CD4-positive, alpha-beta T cell (primary cell): ENCODE measurements at regions of chr12 and their contacts with region 1.

Region 1: DNA sequence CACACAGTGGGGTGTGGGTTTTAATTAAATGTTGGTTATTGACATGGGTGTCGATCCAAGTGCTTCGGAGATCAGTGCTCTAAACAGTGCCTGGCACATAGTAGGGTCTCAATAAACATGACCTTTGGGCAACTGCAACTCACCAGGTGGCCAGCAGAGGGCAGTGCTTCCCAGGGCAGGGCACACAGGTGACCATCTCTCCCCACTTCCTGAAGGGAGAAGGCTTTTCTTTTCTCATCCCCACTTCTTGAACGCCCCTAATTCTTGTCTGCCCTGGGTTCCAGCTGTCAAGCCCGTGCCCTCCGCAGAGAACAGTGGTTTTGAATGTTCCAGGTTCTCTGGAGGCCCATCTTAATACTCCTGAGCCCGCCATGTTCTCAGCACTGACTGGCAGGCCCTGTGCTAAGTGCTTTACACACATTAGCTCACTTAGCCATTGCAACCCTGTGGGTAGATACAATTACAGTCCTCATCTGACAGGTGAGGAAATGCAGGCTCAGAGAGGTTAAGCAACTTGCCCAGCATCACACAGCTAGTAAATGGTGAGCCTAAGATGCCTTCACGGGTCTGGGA is 16.3 kb downstream of the RAPGEF3 start:
- DNase-seq: peak; percentile 57 to 83 (median 68)
- ATAC-seq: peak; percentile 38
- H3K4me3 ChIP-seq: no peak overlapping the region
- H3K4me3 Mint-ChIP-seq: no peak overlapping the region
- H3K27ac ChIP-seq: no peak overlapping the region
- H3K27ac Mint-ChIP-seq: no peak overlapping the region
- H3K4me1 ChIP-seq: peaks cover 38% of the 10 kb centered on the region
- H3K4me1 Mint-ChIP-seq: peaks cover 42% of the 10 kb centered on the region
- H3K27me3 ChIP-seq: no peaks in the 10 kb centered on the region
- H3K27me3 Mint-ChIP-seq: no peaks in the 10 kb centered on the region
- CTCF ChIP-seq: peak; percentile 100

Region 2: GRCh38 chr12:47758834-47759690 is 16.7 kb after region 1 on chr12 and contains the start of gene RAPGEF3:
- CTCF ChIA-PET with region 1: interaction called, 69 read pairs
- POLR2A ChIA-PET with region 1: interaction called, 8 read pairs
- intact Hi-C with region 1: no loop called
- DNase-seq: peak; percentile 35 to 86 (median 65)
- ATAC-seq: peak; percentile 88
- H3K4me3 ChIP-seq: peak within 1 kb of the TSS; percentile 68
- H3K4me3 Mint-ChIP-seq: peak within 1 kb of the TSS; percentile 79
- H3K27ac ChIP-seq: no peak within 1 kb of the TSS
- H3K27ac Mint-ChIP-seq: no peak within 1 kb of the TSS
- H3K4me1 ChIP-seq: peaks cover 39% of the 10 kb centered on the region
- H3K4me1 Mint-ChIP-seq: peaks cover 24% of the 10 kb centered on the region
- H3K27me3 ChIP-seq: no peaks in the 10 kb centered on the region
- H3K27me3 Mint-ChIP-seq: no peaks in the 10 kb centered on the region
- CTCF ChIP-seq: peak; percentile 85
- total RNA-seq, gene RAPGEF3: 0.17 to 0.33 TPM

Region 3: DNA sequence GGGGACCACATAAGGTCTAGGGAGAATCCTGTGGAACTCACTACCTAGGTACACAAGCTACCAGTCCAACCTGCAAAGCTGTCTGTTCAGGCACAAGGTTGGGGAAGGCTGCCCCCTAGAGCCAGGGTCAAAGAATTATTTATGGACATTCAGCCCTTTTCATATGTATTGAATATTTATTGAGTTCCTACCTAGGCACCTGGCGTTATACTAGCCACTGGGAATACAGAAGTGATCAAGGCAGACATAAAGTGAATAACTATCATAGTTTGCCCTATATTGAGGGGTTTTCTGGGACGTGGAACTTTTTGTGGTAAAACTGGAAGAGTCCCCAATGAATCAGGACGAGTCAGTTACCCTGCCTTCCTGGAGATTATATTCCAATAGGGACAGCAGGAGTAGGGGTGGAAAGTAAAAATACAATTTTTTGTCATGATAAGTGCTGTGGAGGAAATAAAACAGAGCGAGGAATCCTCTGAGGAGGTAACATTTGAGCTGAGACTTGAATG is 24.9 kb after region 1 on chr12:
- CTCF ChIA-PET with region 1: interaction called, 157 read pairs
- POLR2A ChIA-PET with region 1: interaction called, 15 read pairs
- intact Hi-C with region 1: loop called in 1 of 2 experiments (anchors 2 kb)
- DNase-seq: peak; percentile 48 to 86 (median 67)
- ATAC-seq: peak; percentile 80
- H3K4me3 ChIP-seq: no peak overlapping the region
- H3K4me3 Mint-ChIP-seq: no peak overlapping the region
- H3K27ac ChIP-seq: no peak overlapping the region
- H3K27ac Mint-ChIP-seq: no peak overlapping the region
- H3K4me1 ChIP-seq: peaks cover 9% of the 10 kb centered on the region
- H3K4me1 Mint-ChIP-seq: peaks cover 19% of the 10 kb centered on the region
- H3K27me3 ChIP-seq: no peaks in the 10 kb centered on the region
- H3K27me3 Mint-ChIP-seq: no peaks in the 10 kb centered on the region
- CTCF ChIP-seq: peak; percentile 31

Region 4: GRCh38 chr12:47773062-47773857 is 30.9 kb after region 1 on chr12 and contains the start of gene SLC48A1:
- CTCF ChIA-PET with region 1: interaction called, 157 read pairs
- POLR2A ChIA-PET with region 1: interaction called, 4 read pairs
- intact Hi-C with region 1: no loop called
- DNase-seq: peak; percentile 57 to 91 (median 72)
- ATAC-seq: peak; percentile 94
- H3K4me3 ChIP-seq: peak within 1 kb of the TSS; percentile 54
- H3K4me3 Mint-ChIP-seq: peak within 1 kb of the TSS; percentile 92
- H3K27ac ChIP-seq: no peak within 1 kb of the TSS
- H3K27ac Mint-ChIP-seq: peak within 1 kb of the TSS; percentile 77
- H3K4me1 ChIP-seq: peaks cover 32% of the 10 kb centered on the region
- H3K4me1 Mint-ChIP-seq: peaks cover 29% of the 10 kb centered on the region
- H3K27me3 ChIP-seq: no peaks in the 10 kb centered on the region
- H3K27me3 Mint-ChIP-seq: no peaks in the 10 kb centered on the region
- CTCF ChIP-seq: peak; percentile 52
- total RNA-seq, gene SLC48A1: 4.5 to 5.8 TPM

Region 5: GRCh38 chr12:48165094-48165981 is 423.0 kb after region 1 on chr12:
- CTCF ChIA-PET with region 1: no interaction called
- POLR2A ChIA-PET with region 1: no interaction called
- intact Hi-C with region 1: no loop called
- DNase-seq: peak in 11 of 14 experiments; percentile 11 to 87 (median 44)
- ATAC-seq: peak; percentile 87
- H3K4me3 ChIP-seq: no peak overlapping the region
- H3K4me3 Mint-ChIP-seq: no peak overlapping the region
- H3K27ac ChIP-seq: no peak overlapping the region
- H3K27ac Mint-ChIP-seq: no peak overlapping the region
- H3K4me1 ChIP-seq: no peaks in the 10 kb centered on the region
- H3K4me1 Mint-ChIP-seq: peaks cover 7% of the 10 kb centered on the region
- H3K27me3 ChIP-seq: no peaks in the 10 kb centered on the region
- H3K27me3 Mint-ChIP-seq: peaks cover 20% of the 10 kb centered on the region
- CTCF ChIP-seq: peak; percentile 98